A549 (cell line): ENCODE measurements at regions of chr3 and their contacts with region 1.

Region 1: GRCh38 chr3:149307435-149307783 is 26.0 kb downstream of the TM4SF18 start:
- DNase-seq: no peak
- ATAC-seq: no peak
- H3K4me3 ChIP-seq: no peak overlapping the region
- H3K27ac ChIP-seq: peak overlapping the region in 1 of 2 experiments; percentile 72; a peak in 3 of 6 replicates
- H3K4me1 ChIP-seq: peaks cover 12% of the 10 kb centered on the region
- CTCF ChIP-seq: no peak
- EP300 ChIP-seq: no peak
- POLR2A ChIP-seq: no peak
- RAD21 ChIP-seq: no peak

Region 2: GRCh38 chr3:149284034-149284433 is 23.4 kb before region 1 on chr3:
- CTCF ChIA-PET with region 1: no interaction called
- POLR2A ChIA-PET with region 1: no interaction called
- DNase-seq: no peak
- ATAC-seq: no peak
- H3K4me3 ChIP-seq: no peak overlapping the region
- H3K27ac ChIP-seq: peak overlapping the region in 1 of 2 experiments; percentile 55; a peak in 3 of 6 replicates
- H3K4me1 ChIP-seq: peaks cover 26% of the 10 kb centered on the region; the same call in 2 of the 3 replicates
- CTCF ChIP-seq: no peak
- EP300 ChIP-seq: no peak
- POLR2A ChIP-seq: no peak
- RAD21 ChIP-seq: no peak

Region 3: GRCh38 chr3:149339931-149340309 is 32.5 kb after region 1 on chr3:
- CTCF ChIA-PET with region 1: interaction called, 10 read pairs
- POLR2A ChIA-PET with region 1: no interaction called
- DNase-seq: peak; percentile 82 to 98
- ATAC-seq: peak; percentile 99 to 100
- H3K4me3 ChIP-seq: 0 out of 3 replicates have a peak overlapping the region, but pooled peaks have one; percentile 2
- H3K27ac ChIP-seq: peak overlapping the region; percentile 88 to 93
- H3K4me1 ChIP-seq: peaks cover 52% of the 10 kb centered on the region
- CTCF ChIP-seq: no peak
- EP300 ChIP-seq: peak; percentile 92 to 95
- POLR2A ChIP-seq: no peak
- RAD21 ChIP-seq: peak; percentile 20 to 44; a peak in 3 of 5 replicates